Keratinocyte (primary cell): ENCODE measurements at regions of chr7 and their contacts with region 1.

Region 1: GRCh38 chr7:485188-486081 is 34.2 kb downstream of the PDGFA start:
- DNase-seq: no peak
- H3K4me3 ChIP-seq: peak overlapping the region in 1 of 3 experiments; percentile 4
- H3K27ac ChIP-seq: no peak overlapping the region
- H3K4me1 ChIP-seq: peaks cover 19% of the 10 kb centered on the region
- H3K27me3 ChIP-seq: no peaks in the 10 kb centered on the region
- CTCF ChIP-seq: peak in 2 of 3 experiments; percentile 5 to 22

Region 2: DNA sequence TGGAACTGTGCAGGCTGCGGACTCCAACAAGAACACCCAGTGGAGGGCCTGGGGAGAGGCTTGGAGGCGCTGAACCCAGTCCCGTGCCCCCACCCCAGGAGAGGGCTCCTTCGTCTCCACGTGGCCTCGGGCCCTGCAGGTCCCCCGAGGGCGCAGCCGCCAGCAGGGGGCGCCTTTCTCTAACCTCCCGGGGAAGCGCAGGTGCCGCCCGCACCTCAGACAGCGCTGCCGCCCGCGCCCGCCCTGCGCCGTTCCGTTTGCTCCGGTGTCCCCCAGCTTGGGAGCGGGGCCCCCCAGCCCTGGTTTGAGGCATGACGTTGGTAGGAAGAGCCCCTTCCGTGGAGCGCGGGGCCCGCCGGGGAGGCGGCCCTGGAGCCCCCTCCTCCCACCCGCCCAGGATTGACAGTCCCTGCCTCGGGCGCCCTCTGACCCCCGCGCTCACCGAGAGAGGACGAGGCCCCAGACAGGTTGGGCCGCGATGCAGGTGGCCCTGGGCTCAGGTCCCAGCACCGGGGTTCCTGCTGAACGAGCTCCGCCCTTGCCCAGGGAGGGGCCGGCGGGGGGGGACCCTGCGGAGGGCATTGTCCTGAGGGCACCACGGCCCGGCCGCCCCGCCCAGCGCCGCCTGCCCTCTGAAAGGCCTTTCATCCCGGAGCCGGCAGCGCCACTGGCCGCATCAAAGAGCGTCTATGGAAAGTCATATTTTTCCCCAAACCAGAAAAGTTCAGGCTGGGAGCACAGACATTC is 152.6 kb before region 1 on chr7:
- dilution Hi-C with region 1: loop called (anchors 10 kb)
- DNase-seq: no peak
- H3K4me3 ChIP-seq: peak overlapping the region; percentile 21 to 49 (median 33)
- H3K27ac ChIP-seq: no peak overlapping the region
- H3K4me1 ChIP-seq: peaks cover 5% of the 10 kb centered on the region
- H3K27me3 ChIP-seq: peaks cover 5% of the 10 kb centered on the region
- CTCF ChIP-seq: peak; percentile 63 to 92 (median 87)